ENCODE measurements at regions of chr14 and their contacts with region 1.

Region 1: DNA sequence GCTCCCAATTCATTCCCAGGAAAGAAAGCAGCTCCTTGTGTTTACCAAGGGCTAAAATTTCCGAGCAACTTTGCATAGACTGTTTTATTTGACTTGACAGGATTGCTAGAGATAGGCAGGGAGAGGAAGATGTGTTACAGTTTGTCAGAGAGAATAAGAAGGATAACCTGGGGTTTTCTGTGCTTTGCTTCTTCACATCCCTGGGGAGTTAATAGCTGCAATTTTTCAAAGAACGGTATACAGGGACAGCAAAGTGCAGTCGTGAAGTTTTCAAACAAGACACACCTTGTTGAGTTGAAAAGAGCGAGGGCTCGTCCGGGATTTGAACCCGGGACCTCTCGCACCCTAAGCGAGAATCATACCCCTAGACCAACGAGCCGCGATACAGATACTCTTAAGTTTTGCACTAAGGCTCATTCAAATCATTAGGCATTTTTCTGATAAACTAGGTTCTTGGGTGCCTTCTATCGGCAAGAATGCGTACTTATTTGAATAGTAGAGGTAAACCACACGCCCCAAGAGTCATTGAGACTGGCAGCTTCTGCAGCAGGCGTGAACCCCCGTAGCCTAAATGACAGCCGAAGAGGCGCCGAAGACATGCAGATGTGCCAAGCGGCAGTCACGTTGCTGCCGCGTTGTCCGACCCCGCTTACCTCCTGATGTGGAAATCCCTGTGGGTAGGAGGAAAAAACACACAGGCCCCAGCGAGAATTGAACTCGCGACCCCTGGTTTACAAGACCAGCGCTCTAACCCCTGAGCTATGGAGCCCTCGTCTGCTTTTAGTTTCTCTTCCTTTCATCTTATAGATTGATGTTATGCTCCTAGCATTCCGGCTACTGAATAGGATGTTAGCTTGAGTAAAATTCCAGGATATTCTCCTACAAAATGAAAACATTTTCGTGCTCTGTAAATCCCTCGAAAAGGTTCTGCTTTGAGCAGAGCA is 22.2 kb upstream of the RNASE12 start:
- DNase-seq: peak; percentile 83
- ATAC-seq: peak; percentile 79 to 88

Region 2: GRCh38 chr14:20327005-20327869 is 286.1 kb before region 1 on chr14:
- intact Hi-C with region 1: loop called (anchors 5 to 10 kb)
- DNase-seq: no peak
- ATAC-seq: peak; percentile 44 to 47

Region 3: GRCh38 chr14:20413045-20413799 is 200.1 kb before region 1 on chr14 and contains the start of gene TEP1:
- intact Hi-C with region 1: loop called (anchors 2 to 5 kb)
- DNase-seq: peak; percentile 94
- ATAC-seq: peak; percentile 97
- total RNA-seq, gene TEP1: 13.1 to 17.1 TPM

Region 4: GRCh38 chr14:20469890-20470602 is 143.3 kb before region 1 on chr14:
- intact Hi-C with region 1: loop called in 1 of 2 experiments (anchors 10 kb)
- DNase-seq: peak; percentile 42
- ATAC-seq: peak; percentile 67 to 91

Region 5: DNA sequence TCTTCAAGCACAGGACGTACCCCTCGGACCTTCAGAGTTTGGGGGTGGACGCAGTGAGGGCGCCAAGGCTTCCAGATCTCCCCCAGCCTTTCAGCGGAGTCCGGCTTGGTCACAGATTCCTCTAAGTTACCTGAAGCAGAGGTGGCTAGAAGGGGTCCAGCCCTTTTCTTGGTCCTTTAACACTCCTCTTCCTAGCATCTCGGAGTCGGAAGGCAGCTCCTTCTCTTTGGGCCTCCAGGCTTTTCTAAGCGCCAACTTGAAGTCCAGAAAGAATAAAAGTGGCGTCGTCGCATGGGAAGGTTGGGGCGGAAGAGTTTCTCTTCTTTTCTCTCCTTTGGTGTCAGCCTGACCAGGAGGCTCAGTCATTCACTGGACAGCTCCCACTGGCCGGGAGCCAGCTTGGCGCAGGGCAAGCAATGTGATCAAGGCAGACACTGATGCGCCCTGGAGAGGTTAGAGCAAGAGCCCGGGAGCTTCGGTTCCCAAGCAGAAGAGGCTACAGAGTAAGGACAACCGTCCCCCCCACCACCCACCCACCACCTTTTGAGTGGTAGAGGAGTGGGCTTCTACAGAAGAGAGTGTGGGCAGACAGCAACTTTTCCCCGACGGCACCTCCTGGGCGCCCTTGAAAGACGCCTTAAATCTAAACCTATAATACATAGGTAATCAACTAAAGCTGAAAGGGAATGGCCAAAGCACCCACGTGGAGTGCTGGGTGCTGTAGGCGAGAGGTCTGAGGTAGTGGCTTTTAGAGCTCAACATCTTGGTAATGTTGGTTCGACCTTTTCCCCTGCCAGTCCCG is 18.7 kb after region 1 on chr14:
- intact Hi-C with region 1: loop called in 1 of 2 experiments (anchors 2 kb)
- DNase-seq: peak; percentile 80
- ATAC-seq: peak; percentile 87 to 90

Measured in left cardiac atrium (tissue), 4 donors.